A673 (cell line): ENCODE measurements at regions of chr21 and their contacts with region 1.

Region 1: GRCh38 chr21:39874759-39875158 is 7.5 kb downstream of the PCP4 start:
- DNase-seq: no peak
- H3K4me3 ChIP-seq: no peak overlapping the region
- H3K27ac ChIP-seq: no peak overlapping the region
- H3K4me1 ChIP-seq: no peaks in the 10 kb centered on the region
- H3K27me3 ChIP-seq: peaks cover 13% of the 10 kb centered on the region
- CTCF ChIP-seq: no peak

Region 2: GRCh38 chr21:39616211-39616772 is 258.5 kb before region 1 on chr21:
- CTCF ChIA-PET with region 1: no interaction called
- POLR2A ChIA-PET with region 1: no interaction called
- intact Hi-C with region 1: no loop called
- DNase-seq: peak; percentile 33
- H3K4me3 ChIP-seq: no peak overlapping the region
- H3K27ac ChIP-seq: no peak overlapping the region
- H3K4me1 ChIP-seq: no peaks in the 10 kb centered on the region
- H3K27me3 ChIP-seq: peaks cover 41% of the 10 kb centered on the region
- CTCF ChIP-seq: no peak

Region 3: GRCh38 chr21:39934895-39935294 is 60.1 kb after region 1 on chr21:
- CTCF ChIA-PET with region 1: no interaction called
- POLR2A ChIA-PET with region 1: interaction called, 10 read pairs
- intact Hi-C with region 1: no loop called
- DNase-seq: no peak
- H3K4me3 ChIP-seq: no peak overlapping the region
- H3K27ac ChIP-seq: no peak overlapping the region
- H3K4me1 ChIP-seq: no peaks in the 10 kb centered on the region
- H3K27me3 ChIP-seq: no peaks in the 10 kb centered on the region
- CTCF ChIP-seq: no peak